Dorsolateral prefrontal cortex (tissue), 120 donors: ENCODE measurements at regions of chr7 and their contacts with region 1.

Region 1: GRCh38 chr7:80018941-80019752 is 115.5 kb upstream of the GNAI1 start:
- DNase-seq: peak in 5 of 10 donors; percentile 13 to 48 (median 27)
- H3K4me3 ChIP-seq: no peak overlapping the region
- H3K27ac ChIP-seq: no peak overlapping the region
- H3K27me3 ChIP-seq: no peaks in the 10 kb centered on the region
- CTCF ChIP-seq: peak; percentile 72 to 96 (median 88)

Region 2: DNA sequence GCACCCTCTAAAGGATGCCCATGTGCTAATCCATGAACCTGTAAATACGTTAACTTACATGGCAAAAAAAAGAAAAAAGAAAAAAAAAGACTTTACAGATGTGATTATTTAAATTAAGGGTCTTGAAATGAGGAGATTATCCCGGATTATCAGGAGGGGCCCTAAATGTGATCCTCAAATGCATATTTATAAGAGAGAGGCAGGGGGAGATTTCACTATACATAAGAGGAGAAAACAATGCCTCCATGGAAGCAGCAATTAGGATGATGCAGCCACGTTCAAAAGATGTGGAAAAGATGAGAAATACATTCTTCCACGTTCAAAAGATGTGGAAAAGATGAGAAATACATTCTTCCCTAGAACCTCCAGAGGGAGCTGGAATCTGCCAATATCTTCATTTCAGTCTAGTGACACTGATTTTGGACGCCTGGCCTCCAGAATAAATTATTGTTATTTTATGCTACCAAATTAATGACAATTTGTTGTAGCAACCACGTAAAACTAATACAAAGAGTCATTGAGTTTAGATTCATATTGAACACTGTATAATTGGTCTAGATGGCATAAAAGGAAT is 212.9 kb before region 1 on chr7:
- intact Hi-C with region 1: loop called in 1 of 2 experiments (anchors 5 kb)
- DNase-seq: no peak
- H3K4me3 ChIP-seq: no peak overlapping the region
- H3K27ac ChIP-seq: no peak overlapping the region
- H3K27me3 ChIP-seq: peaks cover 0 to 2% (median 0%) of the 10 kb centered on the region in 45 donors
- CTCF ChIP-seq: peak in 51 of 56 donors; percentile 16 to 67 (median 45)